ENCODE measurements at regions of chr5 and their contacts with region 1.

Region 1: GRCh38 chr5:40879163-40879942 is 29.9 kb upstream of the C7 start:
- DNase-seq: peak; percentile 6 to 47
- H3K4me3 ChIP-seq: no peak overlapping the region
- H3K27ac ChIP-seq: no peak overlapping the region
- H3K4me1 ChIP-seq: no peaks in the 10 kb centered on the region
- H3K27me3 ChIP-seq: no peaks in the 10 kb centered on the region
- CTCF ChIP-seq: peak; percentile 90

Region 2: GRCh38 chr5:39578887-39579497 is 1300.4 kb before region 1 on chr5:
- CTCF ChIA-PET with region 1: no interaction called
- POLR2A ChIA-PET with region 1: no interaction called
- intact Hi-C with region 1: loop called (anchors 1 kb)
- DNase-seq: no peak
- H3K4me3 ChIP-seq: no peak overlapping the region
- H3K27ac ChIP-seq: no peak overlapping the region
- H3K4me1 ChIP-seq: no peaks in the 10 kb centered on the region
- H3K27me3 ChIP-seq: no peaks in the 10 kb centered on the region
- CTCF ChIP-seq: peak; percentile 92

Region 3: DNA sequence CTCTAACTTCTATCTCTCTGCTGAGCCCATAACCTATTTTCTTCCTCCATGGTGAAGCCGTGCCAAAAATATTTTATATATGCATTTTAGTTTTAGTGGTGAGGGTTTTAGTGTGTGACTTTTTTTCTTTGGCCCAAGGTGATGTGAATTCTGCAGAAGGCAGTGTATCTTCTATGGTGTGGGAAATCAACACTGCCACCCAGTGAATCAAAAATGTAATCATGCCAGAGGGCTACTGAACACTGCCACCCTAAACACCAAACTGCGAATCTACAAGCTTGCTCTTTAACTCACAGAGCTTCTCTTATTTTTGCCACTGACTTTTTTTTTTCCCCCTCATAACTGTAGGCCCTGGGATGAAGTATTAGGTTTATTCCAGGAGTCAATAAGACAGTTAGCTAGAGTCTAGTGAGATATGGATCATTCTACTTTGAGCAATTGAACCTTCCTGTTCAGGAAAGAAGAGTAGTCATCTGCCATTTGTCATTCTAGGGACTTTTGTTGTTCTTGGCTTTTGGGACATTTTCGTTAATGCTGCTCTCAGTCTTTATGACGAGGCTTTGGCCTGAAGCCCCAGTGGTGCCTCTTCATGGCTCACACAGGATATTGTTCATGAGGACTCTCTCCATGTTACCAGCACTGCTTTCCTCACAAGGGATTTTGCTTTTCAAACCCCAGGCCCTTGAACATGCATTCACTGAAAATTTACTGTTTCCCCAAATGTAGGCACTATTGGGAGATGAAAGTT is 83.0 kb after region 1 on chr5:
- CTCF ChIA-PET with region 1: no interaction called
- POLR2A ChIA-PET with region 1: no interaction called
- intact Hi-C with region 1: no loop called
- DNase-seq: no peak
- H3K4me3 ChIP-seq: no peak overlapping the region
- H3K27ac ChIP-seq: no peak overlapping the region
- H3K4me1 ChIP-seq: peaks cover 5% of the 10 kb centered on the region; the same call in 1 of the 2 replicates
- H3K27me3 ChIP-seq: no peaks in the 10 kb centered on the region
- CTCF ChIP-seq: no peak

Region 4: DNA sequence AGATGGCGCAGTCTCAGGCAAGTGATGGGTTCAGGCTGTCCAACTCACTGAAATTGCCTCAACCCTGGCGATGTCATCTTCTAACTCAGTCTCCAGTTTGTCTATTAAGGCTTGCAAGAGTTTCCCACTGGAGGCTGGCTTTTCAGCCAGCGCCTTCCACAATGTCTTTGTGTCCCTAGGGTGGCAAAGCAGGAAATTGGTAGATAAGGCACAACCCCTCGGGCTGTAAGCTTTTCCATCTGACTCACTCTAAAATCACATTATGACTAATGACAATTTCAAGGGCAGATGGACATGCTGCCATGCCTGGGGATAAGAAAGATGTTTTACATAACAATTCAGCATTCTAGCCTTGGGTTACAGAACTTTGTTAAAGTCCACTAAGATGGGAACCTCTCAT is 129.9 kb after region 1 on chr5:
- CTCF ChIA-PET with region 1: no interaction called
- POLR2A ChIA-PET with region 1: no interaction called
- intact Hi-C with region 1: no loop called
- DNase-seq: peak; percentile 82 to 92
- H3K4me3 ChIP-seq: no peak overlapping the region
- H3K27ac ChIP-seq: peak overlapping the region; percentile 7; the same call in 1 of the 2 replicates
- H3K4me1 ChIP-seq: peaks cover 17% of the 10 kb centered on the region
- H3K27me3 ChIP-seq: no peaks in the 10 kb centered on the region
- CTCF ChIP-seq: no peak